ENCODE measurements at regions of chr16 and their contacts with region 1.

Region 1: GRCh38 chr16:75110637-75111513 is 5.7 kb downstream of the LDHD start:
- DNase-seq: peak; percentile 91
- H3K4me3 ChIP-seq: peak overlapping the region; percentile 39
- H3K27ac ChIP-seq: peak overlapping the region; percentile 41
- H3K4me1 ChIP-seq: peaks cover 46% of the 10 kb centered on the region
- H3K27me3 ChIP-seq: no peaks in the 10 kb centered on the region
- CTCF ChIP-seq: peak; percentile 93

Region 2: GRCh38 chr16:74695450-74696422 is 415.1 kb before region 1 on chr16:
- CTCF ChIA-PET with region 1: no interaction called
- POLR2A ChIA-PET with region 1: no interaction called
- intact Hi-C with region 1: no loop called
- DNase-seq: peak; percentile 88
- H3K4me3 ChIP-seq: peak overlapping the region; percentile 45
- H3K27ac ChIP-seq: no peak overlapping the region
- H3K4me1 ChIP-seq: peaks cover 7% of the 10 kb centered on the region
- H3K27me3 ChIP-seq: no peaks in the 10 kb centered on the region
- CTCF ChIP-seq: no peak

Region 3: DNA sequence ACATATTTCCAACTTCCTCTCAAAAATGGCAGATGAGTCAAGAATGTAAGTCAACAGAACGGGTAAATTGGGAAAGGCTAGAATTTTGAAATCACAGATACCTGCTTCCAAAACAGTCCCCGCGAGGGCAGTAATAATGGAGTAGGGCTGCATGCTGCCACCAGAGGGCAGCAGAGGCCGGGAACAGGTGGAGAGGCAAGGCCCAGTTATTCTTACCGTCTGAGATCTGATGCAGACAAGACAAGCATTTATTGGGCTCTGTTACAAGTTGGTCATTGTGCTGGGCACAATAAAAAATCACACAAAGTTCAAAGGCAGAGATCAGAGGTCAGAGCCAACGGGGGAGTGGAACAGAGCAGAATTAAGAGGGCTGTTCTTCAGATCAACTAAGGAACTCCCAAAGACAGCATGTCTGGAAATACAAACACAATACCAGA is 401.4 kb before region 1 on chr16:
- CTCF ChIA-PET with region 1: interaction called, 4 read pairs
- POLR2A ChIA-PET with region 1: no interaction called
- intact Hi-C with region 1: loop called (anchors 2 kb)
- DNase-seq: peak; percentile 84
- H3K4me3 ChIP-seq: no peak overlapping the region
- H3K27ac ChIP-seq: no peak overlapping the region
- H3K4me1 ChIP-seq: no peaks in the 10 kb centered on the region
- H3K27me3 ChIP-seq: no peaks in the 10 kb centered on the region
- CTCF ChIP-seq: peak; percentile 99

Region 4: GRCh38 chr16:74813109-74813641 is 297.7 kb before region 1 on chr16:
- CTCF ChIA-PET with region 1: interaction called, 9 read pairs
- POLR2A ChIA-PET with region 1: no interaction called
- intact Hi-C with region 1: loop called (anchors 5 kb)
- DNase-seq: peak; percentile 78
- H3K4me3 ChIP-seq: no peak overlapping the region
- H3K27ac ChIP-seq: no peak overlapping the region
- H3K4me1 ChIP-seq: no peaks in the 10 kb centered on the region
- H3K27me3 ChIP-seq: no peaks in the 10 kb centered on the region
- CTCF ChIP-seq: peak; percentile 93

Region 5: GRCh38 chr16:74998481-74999218 is 112.2 kb before region 1 on chr16 and contains the start of gene ZNRF1:
- CTCF ChIA-PET with region 1: interaction called, 34 read pairs
- POLR2A ChIA-PET with region 1: no interaction called
- intact Hi-C with region 1: loop called (anchors 1 kb)
- DNase-seq: peak; percentile 86
- H3K4me3 ChIP-seq: peak within 1 kb of the TSS; percentile 95
- H3K27ac ChIP-seq: peak within 1 kb of the TSS; percentile 89
- H3K4me1 ChIP-seq: peaks cover 20% of the 10 kb centered on the region
- H3K27me3 ChIP-seq: no peaks in the 10 kb centered on the region
- CTCF ChIP-seq: peak; percentile 82
- total RNA-seq, gene ZNRF1: 55.1 and 59.9 TPM in 2 replicates

Region 6: DNA sequence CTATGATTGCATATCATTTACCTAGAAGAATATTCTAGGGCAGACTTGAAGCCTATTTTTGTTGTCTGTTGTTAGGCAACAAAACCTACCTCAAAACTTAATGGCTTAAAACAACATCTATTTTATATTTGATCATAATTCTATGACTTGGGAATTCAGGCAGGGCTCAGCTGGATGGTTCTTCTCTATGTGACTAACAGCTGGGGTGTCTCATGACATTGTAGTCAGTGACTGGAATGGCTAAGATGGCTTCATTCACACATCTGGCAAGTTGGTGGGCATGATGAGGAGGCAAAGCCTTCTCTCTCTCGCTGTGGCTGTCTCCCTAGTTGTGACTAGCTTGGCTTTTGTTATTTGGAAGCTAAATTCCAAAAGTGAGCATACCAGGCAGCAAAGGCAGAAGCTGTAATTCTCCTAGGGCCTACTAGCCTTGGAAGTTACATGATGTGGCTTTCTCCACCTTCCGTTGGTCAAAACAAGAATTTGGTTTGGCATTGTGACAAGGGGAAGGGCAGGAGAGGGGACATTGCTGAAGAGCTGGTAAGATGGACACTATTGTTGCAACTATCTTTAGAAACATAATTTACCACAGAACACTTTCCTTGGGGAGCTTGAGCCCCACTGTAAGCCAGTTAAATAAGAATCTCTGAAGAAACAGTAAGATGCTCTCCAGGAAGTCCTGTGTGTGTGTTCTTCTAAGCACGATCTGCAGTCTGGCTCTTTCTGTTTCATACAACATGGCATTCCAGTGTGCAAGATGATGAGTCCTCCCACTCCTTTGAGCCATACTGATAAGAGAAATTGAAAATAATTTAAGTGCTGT is 72.6 kb before region 1 on chr16:
- CTCF ChIA-PET with region 1: no interaction called
- POLR2A ChIA-PET with region 1: no interaction called
- intact Hi-C with region 1: no loop called
- DNase-seq: no peak
- H3K4me3 ChIP-seq: no peak overlapping the region
- H3K27ac ChIP-seq: no peak overlapping the region
- H3K4me1 ChIP-seq: no peaks in the 10 kb centered on the region
- H3K27me3 ChIP-seq: no peaks in the 10 kb centered on the region
- CTCF ChIP-seq: no peak

Measured in A673 (cell line).